ENCODE measurements at regions of chr1 and their contacts with region 1.

Region 1: DNA sequence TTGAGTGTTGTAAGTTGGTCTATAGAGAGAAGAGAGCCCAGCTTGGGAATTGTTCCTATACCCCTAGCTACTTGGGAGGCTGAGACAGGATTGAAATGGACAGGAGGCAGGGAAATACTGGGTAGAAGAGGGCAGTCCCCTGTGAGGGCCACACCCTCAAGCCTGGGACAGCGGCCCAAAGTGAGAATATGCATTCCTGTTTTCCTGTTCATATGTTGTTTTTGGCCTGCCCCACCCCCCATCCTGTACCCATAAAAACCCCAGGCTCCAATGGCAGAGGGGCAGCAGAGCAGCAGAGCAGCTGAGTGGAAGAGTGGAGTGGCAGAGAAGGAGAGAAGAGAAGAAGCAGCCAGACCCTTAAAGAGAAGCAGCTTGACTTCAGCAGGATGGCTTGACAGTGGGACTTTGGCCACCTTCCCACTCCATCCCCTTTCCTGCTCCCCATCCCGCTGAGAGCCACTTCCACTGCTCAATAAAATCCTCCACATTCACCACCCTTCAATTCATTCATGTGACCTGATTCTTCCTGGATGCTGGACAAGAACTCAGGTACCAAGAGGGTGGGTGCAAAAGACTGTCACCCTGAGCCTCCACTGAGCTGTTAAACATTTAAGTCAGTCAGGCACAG is 70.6 kb upstream of the PUM1 start:
- DNase-seq: no peak
- H3K4me3 ChIP-seq: no peak overlapping the region
- H3K27ac ChIP-seq: no peak overlapping the region
- H3K4me1 ChIP-seq: no peaks in the 10 kb centered on the region
- H3K27me3 ChIP-seq: no peaks in the 10 kb centered on the region
- CTCF ChIP-seq: no peak
- POLR2A ChIP-seq: no peak

Region 2: DNA sequence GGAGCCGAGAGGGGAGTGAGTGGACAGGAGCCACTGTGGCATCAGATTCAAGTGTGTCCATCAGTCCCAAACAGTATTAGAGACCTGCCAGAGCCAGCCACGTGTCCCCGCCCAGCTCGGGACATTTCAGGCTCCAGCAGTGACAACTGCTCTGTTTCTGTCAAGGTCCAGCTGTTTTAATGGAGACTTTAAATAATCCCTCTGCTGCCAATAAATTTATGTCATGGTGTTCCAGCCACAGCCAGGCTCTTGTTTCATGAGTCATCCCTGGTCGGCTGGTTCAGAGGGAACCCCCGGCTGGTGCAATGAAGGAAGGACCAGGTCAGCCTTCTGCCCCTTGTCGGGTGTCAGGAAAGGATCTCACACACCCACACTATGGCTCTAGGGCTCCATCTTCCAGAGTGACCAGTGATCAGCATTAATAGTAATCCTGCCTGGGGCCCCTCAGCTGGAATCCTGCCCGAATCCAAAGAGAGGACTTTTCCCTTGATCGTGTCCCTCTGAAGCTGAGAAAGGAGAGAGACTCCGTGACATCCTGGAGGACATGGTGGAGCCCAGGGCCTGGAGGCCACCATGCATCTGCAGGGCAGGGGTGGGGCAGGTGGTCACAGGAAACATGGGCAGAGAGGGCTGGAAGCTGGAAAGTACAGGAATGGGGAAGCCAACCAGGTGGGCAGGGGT is 610.0 kb before region 1 on chr1:
- intact Hi-C with region 1: no loop called
- DNase-seq: peak; percentile 67 to 87 (median 83)
- H3K4me3 ChIP-seq: no peak overlapping the region
- H3K27ac ChIP-seq: peak overlapping the region in 3 of 5 donors; percentile 5 to 87 (median 17)
- H3K4me1 ChIP-seq: peaks cover 4 to 17% of the 10 kb centered on the region in 2 donors
- H3K27me3 ChIP-seq: no peaks in the 10 kb centered on the region
- CTCF ChIP-seq: no peak
- POLR2A ChIP-seq: no peak

Region 3: DNA sequence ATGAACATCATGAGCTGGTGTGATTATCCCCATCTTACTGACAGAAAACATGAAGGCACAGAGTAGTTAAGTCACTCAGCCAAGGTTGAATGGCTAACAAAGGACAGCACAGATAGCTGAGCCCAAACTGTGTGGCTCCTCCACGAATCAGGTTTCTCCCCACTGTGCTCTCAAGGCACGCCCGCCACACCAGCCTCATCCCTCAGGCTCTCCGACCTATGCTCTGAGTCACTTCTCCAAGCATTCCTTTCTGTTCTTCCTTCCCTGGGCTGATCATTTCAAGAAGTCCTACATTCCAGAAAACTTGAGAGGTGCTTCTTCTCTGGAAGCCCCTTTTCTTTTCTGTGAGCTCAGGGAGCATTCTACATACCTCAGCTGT is 202.2 kb before region 1 on chr1:
- intact Hi-C with region 1: loop called in 1 of 2 experiments (anchors 10 kb)
- DNase-seq: peak in 2 of 7 donors; percentile 32 to 41
- H3K4me3 ChIP-seq: no peak overlapping the region
- H3K27ac ChIP-seq: peak overlapping the region in 1 of 5 donors; percentile 54
- H3K4me1 ChIP-seq: no peaks in the 10 kb centered on the region
- H3K27me3 ChIP-seq: no peaks in the 10 kb centered on the region
- CTCF ChIP-seq: no peak
- POLR2A ChIP-seq: no peak

Region 4: DNA sequence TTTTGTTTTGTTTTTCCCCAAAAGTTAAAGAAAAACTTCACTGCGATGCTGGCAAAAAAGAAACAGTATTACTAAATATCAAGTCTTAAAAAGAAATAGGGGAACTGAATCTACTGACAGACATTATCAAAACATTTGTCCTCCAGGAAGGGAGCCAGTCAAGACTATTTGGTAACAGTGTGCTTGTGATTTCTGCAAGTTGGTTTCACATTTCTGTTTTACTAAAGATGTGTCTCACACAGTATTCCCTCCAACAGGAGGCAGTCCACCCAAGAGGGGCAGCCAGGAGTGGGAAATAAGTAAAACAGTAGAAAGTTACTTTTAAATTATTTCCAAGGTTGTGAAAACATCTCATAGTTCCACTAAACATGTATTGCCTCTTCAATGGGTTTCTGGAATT is 153.2 kb before region 1 on chr1:
- intact Hi-C with region 1: no loop called
- DNase-seq: peak in 1 of 7 donors; percentile 28
- H3K4me3 ChIP-seq: no peak overlapping the region
- H3K27ac ChIP-seq: peak overlapping the region in 2 of 5 donors; percentile 59 to 62
- H3K4me1 ChIP-seq: peaks cover 46 to 63% of the 10 kb centered on the region in 2 donors
- H3K27me3 ChIP-seq: no peaks in the 10 kb centered on the region
- CTCF ChIP-seq: peak in 3 of 6 experiments; percentile 12 to 21 (median 18)
- POLR2A ChIP-seq: no peak